Psoas muscle (tissue), 8 donors: ENCODE measurements at regions of chr3 and their contacts with region 1.

Region 1: GRCh38 chr3:9915254-9916141 is 1.4 kb upstream of the IL17RC start:
- DNase-seq: peak; percentile 76 to 85
- ATAC-seq: peak; percentile 47 to 60 (median 57)
- H3K4me3 ChIP-seq: peak overlapping the region; percentile 80
- H3K27ac ChIP-seq: peak overlapping the region; percentile 81
- H3K4me1 ChIP-seq: peaks cover 12% of the 10 kb centered on the region
- H3K27me3 ChIP-seq: no peaks in the 10 kb centered on the region
- CTCF ChIP-seq: peak; percentile 24

Region 2: DNA sequence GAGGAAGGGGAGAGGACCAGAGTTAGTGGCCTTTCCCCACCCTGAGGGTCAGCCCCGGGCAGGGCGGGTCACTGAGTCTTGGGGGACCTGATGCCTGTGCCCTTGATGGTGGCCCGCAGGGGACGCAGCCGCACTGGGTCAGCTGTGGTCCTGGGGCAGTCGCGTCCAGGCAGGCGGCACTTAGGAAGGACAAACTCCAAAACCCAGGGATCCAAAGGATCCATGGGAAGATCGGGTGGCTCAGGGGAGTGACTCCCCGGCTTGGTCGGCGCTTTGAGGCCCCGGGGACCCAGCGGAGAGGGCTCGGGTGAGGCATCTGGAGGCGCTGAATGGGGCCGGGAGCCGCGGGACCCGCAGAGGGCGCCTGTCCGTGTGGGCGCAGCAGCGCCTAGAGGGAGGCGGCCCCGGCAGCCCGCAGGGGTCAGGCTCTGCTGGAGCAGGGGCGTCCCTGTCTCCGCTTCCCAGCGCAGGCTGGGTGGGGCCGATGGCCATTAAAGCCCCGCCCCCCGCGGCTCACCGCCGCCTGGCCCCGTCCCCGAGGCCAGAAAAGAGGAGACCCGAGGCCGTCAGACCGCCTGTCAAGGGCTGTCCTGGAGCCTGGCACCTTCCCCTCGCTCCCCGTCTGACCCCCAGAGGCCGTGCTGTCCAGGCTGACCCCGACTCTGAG is 53.0 kb before region 1 on chr3:
- intact Hi-C with region 1: loop called in 1 of 2 experiments (anchors 10 kb)
- DNase-seq: peak; percentile 70 to 84
- ATAC-seq: peak; percentile 79 to 92 (median 87)
- H3K4me3 ChIP-seq: peak overlapping the region; percentile 65
- H3K27ac ChIP-seq: no peak overlapping the region
- H3K4me1 ChIP-seq: no peaks in the 10 kb centered on the region
- H3K27me3 ChIP-seq: no peaks in the 10 kb centered on the region
- CTCF ChIP-seq: peak; percentile 44

Region 3: DNA sequence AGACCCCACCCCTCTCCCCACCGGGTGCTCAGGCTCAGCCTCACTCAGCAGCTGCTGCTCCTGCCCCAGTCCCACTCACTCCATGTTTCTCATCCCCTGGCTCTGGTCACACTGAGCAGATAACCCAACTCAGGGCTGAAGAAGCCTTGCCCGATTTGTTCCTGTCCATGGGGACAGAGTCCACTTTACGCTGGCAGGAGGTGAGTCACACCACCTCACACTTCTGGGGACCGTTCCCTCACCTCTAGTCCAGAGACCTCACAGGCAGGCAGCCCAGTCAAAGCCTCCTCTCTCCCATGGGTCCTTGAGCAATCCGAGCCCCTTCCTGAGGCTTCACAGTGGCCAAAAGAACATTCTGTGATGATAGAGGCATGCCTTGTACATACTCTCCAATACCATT is 36.8 kb before region 1 on chr3:
- intact Hi-C with region 1: no loop called
- DNase-seq: no peak
- ATAC-seq: peak in 3 of 4 donors; percentile 13 to 30 (median 24)
- H3K4me3 ChIP-seq: no peak overlapping the region
- H3K27ac ChIP-seq: no peak overlapping the region
- H3K4me1 ChIP-seq: no peaks in the 10 kb centered on the region
- H3K27me3 ChIP-seq: no peaks in the 10 kb centered on the region
- CTCF ChIP-seq: no peak